SK-N-SH (cell line): ENCODE measurements at regions of chr2 and their contacts with region 1.

Region 1: GRCh38 chr2:240840435-240841080 is 20.5 kb upstream of the KIF1A start:
- DNase-seq: peak; percentile 96
- H3K4me3 ChIP-seq: no peak overlapping the region
- H3K27ac ChIP-seq: no peak overlapping the region
- H3K4me1 ChIP-seq: peaks cover 0 to 19% of the 10 kb centered on the region in 2 experiments; a peak in 1 of 4 replicates
- H3K27me3 ChIP-seq: no peaks in the 10 kb centered on the region; the same call in 1 of the 2 replicates
- CTCF ChIP-seq: peak; percentile 63
- EP300 ChIP-seq: no peak
- RAD21 ChIP-seq: peak; percentile 85

Region 2: DNA sequence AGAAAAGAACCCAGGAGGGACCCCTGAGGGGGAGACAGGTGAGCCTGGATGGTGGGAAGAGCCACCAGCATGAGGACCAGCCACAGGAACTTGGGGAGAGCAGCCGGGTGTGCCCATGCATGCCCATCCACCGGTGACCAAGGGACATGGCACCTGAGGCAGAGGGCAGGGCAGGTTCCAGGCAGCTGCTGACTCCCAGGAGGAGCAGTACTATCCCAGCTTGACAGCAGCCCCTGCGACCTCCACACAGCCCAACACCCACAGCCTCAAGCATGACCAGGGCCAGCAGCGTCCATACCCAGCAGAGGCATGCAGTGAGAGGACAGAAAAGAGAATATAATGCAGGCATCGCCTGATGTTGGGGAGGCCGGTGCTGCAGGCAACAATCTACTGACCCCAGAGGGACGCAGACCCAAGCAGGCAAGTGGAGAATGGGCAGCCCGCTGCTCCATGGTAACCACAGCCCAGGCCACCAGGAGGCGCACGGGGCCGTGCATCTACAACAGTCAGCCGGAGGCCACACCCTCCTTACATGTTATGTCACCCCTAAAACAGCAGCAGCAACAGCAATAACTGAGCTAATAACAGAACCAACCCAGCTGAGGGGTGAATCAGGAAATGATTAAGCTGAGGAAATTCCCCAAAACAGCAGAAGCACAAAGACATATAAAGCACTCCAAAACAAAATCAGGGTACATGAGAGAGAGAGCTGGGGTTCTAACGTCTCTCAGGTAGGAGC is 326.8 kb before region 1 on chr2:
- CTCF ChIA-PET with region 1: interaction called, 11 read pairs
- POLR2A ChIA-PET with region 1: no interaction called
- DNase-seq: peak; percentile 87
- H3K4me3 ChIP-seq: no peak overlapping the region
- H3K27ac ChIP-seq: no peak overlapping the region
- H3K4me1 ChIP-seq: no peaks in the 10 kb centered on the region; a peak in 1 of 4 replicates
- H3K27me3 ChIP-seq: no peaks in the 10 kb centered on the region
- CTCF ChIP-seq: peak; percentile 55
- EP300 ChIP-seq: no peak
- RAD21 ChIP-seq: peak; percentile 72

Region 3: DNA sequence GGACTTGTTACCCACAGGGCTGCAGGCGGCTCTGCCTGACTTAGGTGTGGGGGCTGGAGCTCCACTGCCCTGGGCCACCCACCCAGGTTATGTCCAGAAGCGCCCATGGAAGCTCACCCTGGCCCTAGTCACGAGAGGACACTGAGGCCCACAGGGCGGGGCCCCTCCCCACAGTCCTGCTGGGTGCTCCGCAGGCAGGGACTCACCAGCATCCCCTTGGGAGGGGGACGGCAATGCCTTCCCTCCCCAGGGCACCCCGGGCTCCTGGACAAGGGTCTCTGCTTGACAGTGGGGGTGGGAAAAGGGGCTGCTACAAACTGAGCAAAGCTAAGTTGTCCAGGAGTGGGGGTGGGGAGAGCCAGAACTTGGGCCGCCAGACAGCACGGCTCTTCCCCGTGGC is 88.3 kb before region 1 on chr2:
- CTCF ChIA-PET with region 1: interaction called, 13 read pairs
- POLR2A ChIA-PET with region 1: no interaction called
- DNase-seq: no peak
- H3K4me3 ChIP-seq: no peak overlapping the region
- H3K27ac ChIP-seq: no peak overlapping the region
- H3K4me1 ChIP-seq: no peaks in the 10 kb centered on the region
- H3K27me3 ChIP-seq: no peaks in the 10 kb centered on the region
- CTCF ChIP-seq: no peak
- EP300 ChIP-seq: no peak
- RAD21 ChIP-seq: no peak

Region 4: DNA sequence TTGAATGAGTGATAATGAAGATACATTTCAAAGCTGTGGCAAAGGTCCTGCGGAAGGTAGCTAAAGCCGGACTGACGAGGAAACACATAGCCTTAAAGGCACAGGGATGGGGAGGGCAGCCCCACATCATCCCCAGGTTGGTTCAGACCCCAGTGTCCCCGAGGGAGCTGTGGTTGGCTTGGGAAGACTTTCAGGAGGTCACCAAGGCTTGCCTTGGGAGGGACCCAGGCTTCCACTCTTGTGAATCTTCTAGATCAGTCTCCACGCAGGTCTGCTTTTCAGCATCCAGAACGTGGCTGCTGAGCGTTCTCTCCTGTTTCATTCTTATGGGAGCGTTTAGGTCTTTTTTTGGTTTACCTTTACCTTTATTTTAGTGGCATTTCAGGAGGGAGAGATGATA is 37.4 kb before region 1 on chr2:
- CTCF ChIA-PET with region 1: interaction called, 10 read pairs
- POLR2A ChIA-PET with region 1: no interaction called
- DNase-seq: no peak
- H3K4me3 ChIP-seq: no peak overlapping the region
- H3K27ac ChIP-seq: no peak overlapping the region
- H3K4me1 ChIP-seq: peaks cover 0 to 5% of the 10 kb centered on the region in 2 experiments; a peak in 1 of 4 replicates
- H3K27me3 ChIP-seq: no peaks in the 10 kb centered on the region
- CTCF ChIP-seq: no peak
- EP300 ChIP-seq: no peak
- RAD21 ChIP-seq: no peak

Region 5: DNA sequence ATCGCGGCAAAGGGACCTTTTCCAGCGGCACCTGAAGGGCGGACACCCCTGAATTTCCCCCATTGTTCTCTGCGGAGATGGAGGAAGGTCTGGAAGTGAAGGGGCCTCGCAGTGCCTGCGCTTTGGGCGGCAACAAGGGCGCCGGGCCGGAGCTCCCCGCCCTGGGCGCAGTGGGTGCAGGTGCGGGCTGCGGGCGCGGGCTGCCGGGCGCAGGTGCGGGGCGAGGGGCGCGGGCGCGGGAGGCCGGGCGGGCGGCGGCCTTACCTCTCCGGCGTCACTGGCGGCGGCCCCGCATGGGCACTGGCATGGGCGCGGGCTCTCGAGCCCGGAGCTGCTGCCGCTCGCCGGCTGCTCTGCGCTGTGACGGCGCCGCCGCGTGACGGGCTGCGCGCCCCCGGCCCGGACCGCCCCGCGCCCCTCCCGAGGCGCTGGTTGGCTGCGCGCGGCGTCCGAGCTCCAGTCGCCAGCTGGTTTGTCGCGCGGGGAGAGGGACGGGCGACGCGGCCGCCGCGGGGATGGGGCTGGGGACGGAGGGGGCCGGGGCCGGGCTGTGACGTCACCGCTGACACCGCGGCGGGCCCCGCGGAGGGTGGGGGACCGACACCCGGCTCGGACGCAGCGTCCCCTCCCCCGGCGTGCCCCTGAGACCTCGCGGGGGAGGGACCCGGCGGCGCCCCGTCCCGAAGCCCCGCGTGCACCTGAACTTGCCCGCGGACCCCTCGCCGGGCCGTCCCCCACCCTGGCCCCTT is 20.5 kb before region 1 on chr2 and contains the start of gene KIF1A:
- CTCF ChIA-PET with region 1: interaction called, 50 read pairs
- POLR2A ChIA-PET with region 1: interaction called, 10 read pairs
- DNase-seq: peak; percentile 98
- H3K4me3 ChIP-seq: peak within 1 kb of the TSS in 1 of 2 experiments; percentile 55; a peak in 2 of 4 replicates
- H3K27ac ChIP-seq: peak within 1 kb of the TSS in 1 of 2 experiments; percentile 85; a peak in 2 of 4 replicates
- H3K4me1 ChIP-seq: peaks cover 0 to 18% of the 10 kb centered on the region in 2 experiments; a peak in 1 of 4 replicates
- H3K27me3 ChIP-seq: peaks cover 36% of the 10 kb centered on the region
- CTCF ChIP-seq: no peak
- EP300 ChIP-seq: no peak
- RAD21 ChIP-seq: no peak
- polyA plus RNA-seq, gene KIF1A: 0.21 and 0.32 TPM in 2 replicates